Right lobe of liver (tissue), 6 donors: ENCODE measurements at regions of chr1 and their contacts with region 1.

Region 1: GRCh38 chr1:234163267-234163919 is 209.9 kb upstream of the COA6 start:
- DNase-seq: no peak
- ATAC-seq: no peak
- H3K4me3 ChIP-seq: no peak overlapping the region
- H3K27ac ChIP-seq: no peak overlapping the region
- H3K4me1 ChIP-seq: no peaks in the 10 kb centered on the region
- H3K27me3 ChIP-seq: no peaks in the 10 kb centered on the region
- CTCF ChIP-seq: no peak
- POLR2A ChIP-seq: no peak

Region 2: DNA sequence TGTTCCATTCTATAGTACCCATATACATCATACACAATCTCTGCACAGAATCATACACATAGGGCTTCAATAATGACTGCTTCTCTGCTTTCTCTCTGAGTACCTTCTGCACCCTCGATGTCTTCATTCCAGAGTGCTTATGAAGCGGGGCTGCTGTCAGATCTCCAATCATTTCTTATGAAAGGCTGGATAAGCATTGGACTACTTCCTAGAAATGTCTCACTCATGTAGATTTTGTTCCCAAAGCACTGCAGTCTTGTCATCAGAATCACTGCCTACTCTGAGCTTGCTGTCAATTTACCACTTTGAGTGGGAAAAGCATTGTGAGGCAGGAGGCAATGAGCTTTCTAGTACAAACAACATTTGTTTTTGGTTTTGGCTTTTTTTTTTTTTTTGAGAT is 79.9 kb before region 1 on chr1:
- intact Hi-C with region 1: no loop called
- DNase-seq: no peak
- ATAC-seq: no peak
- H3K4me3 ChIP-seq: no peak overlapping the region
- H3K27ac ChIP-seq: no peak overlapping the region
- H3K4me1 ChIP-seq: no peaks in the 10 kb centered on the region
- H3K27me3 ChIP-seq: no peaks in the 10 kb centered on the region
- CTCF ChIP-seq: no peak
- POLR2A ChIP-seq: no peak

Region 3: DNA sequence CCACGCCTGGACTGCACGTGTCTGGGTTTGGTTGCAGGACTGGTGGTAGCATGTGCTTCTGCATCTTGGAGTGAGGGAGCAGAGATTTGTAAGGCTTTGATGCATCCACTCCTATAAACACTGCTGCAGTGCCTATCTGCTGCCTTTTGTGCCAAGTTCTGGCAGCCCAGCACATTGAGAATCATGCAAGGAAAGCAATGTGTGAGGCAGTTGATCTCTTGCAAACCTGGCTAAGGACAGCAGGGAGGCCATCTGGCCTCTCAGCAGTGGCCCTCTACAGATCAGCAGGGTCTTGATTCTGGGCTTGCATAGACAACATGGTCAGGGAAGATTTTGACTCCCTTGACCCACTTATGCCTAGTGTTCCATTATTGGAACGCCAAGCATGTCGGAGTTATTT is 128.6 kb after region 1 on chr1:
- intact Hi-C with region 1: loop called in 1 of 2 experiments (anchors 10 kb)
- DNase-seq: no peak
- ATAC-seq: no peak
- H3K4me3 ChIP-seq: no peak overlapping the region
- H3K27ac ChIP-seq: no peak overlapping the region
- H3K4me1 ChIP-seq: no peaks in the 10 kb centered on the region
- H3K27me3 ChIP-seq: no peaks in the 10 kb centered on the region
- CTCF ChIP-seq: no peak
- POLR2A ChIP-seq: no peak